T-cell (primary cell): ENCODE measurements at regions of chr9 and their contacts with region 1.

Region 1: GRCh38 chr9:110669438-110669837 is 847 bp downstream of the MUSK start:
- DNase-seq: no peak
- ATAC-seq: no peak
- H3K4me3 ChIP-seq: no peak overlapping the region
- H3K4me3 Mint-ChIP-seq: no peak overlapping the region
- H3K27ac ChIP-seq: no peak overlapping the region
- H3K27ac Mint-ChIP-seq: no peak overlapping the region
- H3K4me1 ChIP-seq: no peaks in the 10 kb centered on the region
- H3K4me1 Mint-ChIP-seq: no peaks in the 10 kb centered on the region
- H3K27me3 ChIP-seq: no peaks in the 10 kb centered on the region
- H3K27me3 Mint-ChIP-seq: no peaks in the 10 kb centered on the region

Region 2: GRCh38 chr9:110687497-110687896 is 18.1 kb after region 1 on chr9:
- CTCF ChIA-PET with region 1: no interaction called
- POLR2A ChIA-PET with region 1: no interaction called
- DNase-seq: no peak
- ATAC-seq: no peak
- H3K4me3 ChIP-seq: no peak overlapping the region
- H3K4me3 Mint-ChIP-seq: no peak overlapping the region
- H3K27ac ChIP-seq: no peak overlapping the region
- H3K27ac Mint-ChIP-seq: no peak overlapping the region
- H3K4me1 ChIP-seq: no peaks in the 10 kb centered on the region
- H3K4me1 Mint-ChIP-seq: no peaks in the 10 kb centered on the region
- H3K27me3 ChIP-seq: no peaks in the 10 kb centered on the region
- H3K27me3 Mint-ChIP-seq: peaks cover 0 to 3% of the 10 kb centered on the region in 2 donors

Region 3: DNA sequence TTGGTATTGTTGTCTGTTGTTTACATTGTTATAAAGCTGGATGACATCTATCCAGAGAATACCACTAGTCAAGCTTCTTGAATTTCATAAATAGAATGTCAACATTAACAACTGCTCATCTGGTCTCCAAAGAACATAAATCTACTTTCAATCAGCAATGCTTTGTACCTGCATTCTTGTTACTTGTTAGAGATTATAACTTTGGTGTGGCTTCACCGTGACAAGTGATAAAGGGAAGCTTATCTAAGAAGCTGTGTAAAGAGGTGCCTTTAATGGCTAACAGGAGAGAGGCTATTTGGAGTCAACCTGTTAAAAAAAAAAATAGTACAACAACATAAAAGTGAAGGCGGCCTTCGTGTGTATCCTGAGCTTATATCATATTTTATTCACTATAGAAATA is 41.0 kb after region 1 on chr9:
- CTCF ChIA-PET with region 1: interaction called in 1 of 2 experiments, 12 read pairs
- POLR2A ChIA-PET with region 1: no interaction called
- DNase-seq: no peak
- ATAC-seq: no peak
- H3K4me3 ChIP-seq: no peak overlapping the region
- H3K4me3 Mint-ChIP-seq: no peak overlapping the region
- H3K27ac ChIP-seq: no peak overlapping the region
- H3K27ac Mint-ChIP-seq: no peak overlapping the region
- H3K4me1 ChIP-seq: no peaks in the 10 kb centered on the region
- H3K4me1 Mint-ChIP-seq: no peaks in the 10 kb centered on the region
- H3K27me3 ChIP-seq: no peaks in the 10 kb centered on the region
- H3K27me3 Mint-ChIP-seq: no peaks in the 10 kb centered on the region

Region 4: DNA sequence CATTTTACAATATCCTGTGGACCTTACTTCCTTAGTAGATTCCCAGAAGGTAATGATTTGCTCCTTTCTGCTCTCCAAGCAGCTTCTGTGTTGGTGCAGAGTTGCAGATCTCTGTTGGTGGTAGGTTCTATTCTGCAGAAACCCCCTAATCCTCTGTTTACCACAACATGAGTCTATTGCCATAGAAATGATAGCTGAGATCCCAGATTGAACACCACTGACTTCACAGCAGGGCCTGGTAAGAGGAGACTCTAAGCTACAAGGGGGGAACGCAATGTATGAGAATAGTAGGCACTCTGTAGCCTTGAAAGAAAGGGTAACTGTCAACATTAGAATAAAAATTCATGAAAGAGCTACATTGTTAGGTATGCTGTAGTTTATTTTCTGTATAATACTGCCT is 58.6 kb after region 1 on chr9:
- CTCF ChIA-PET with region 1: no interaction called
- POLR2A ChIA-PET with region 1: no interaction called
- DNase-seq: no peak
- ATAC-seq: no peak
- H3K4me3 ChIP-seq: no peak overlapping the region
- H3K4me3 Mint-ChIP-seq: no peak overlapping the region
- H3K27ac ChIP-seq: no peak overlapping the region
- H3K27ac Mint-ChIP-seq: no peak overlapping the region
- H3K4me1 ChIP-seq: no peaks in the 10 kb centered on the region
- H3K4me1 Mint-ChIP-seq: no peaks in the 10 kb centered on the region
- H3K27me3 ChIP-seq: no peaks in the 10 kb centered on the region
- H3K27me3 Mint-ChIP-seq: no peaks in the 10 kb centered on the region